WTC11 (cell line): ENCODE measurements at regions of chr1 and their contacts with region 1.

Region 1: DNA sequence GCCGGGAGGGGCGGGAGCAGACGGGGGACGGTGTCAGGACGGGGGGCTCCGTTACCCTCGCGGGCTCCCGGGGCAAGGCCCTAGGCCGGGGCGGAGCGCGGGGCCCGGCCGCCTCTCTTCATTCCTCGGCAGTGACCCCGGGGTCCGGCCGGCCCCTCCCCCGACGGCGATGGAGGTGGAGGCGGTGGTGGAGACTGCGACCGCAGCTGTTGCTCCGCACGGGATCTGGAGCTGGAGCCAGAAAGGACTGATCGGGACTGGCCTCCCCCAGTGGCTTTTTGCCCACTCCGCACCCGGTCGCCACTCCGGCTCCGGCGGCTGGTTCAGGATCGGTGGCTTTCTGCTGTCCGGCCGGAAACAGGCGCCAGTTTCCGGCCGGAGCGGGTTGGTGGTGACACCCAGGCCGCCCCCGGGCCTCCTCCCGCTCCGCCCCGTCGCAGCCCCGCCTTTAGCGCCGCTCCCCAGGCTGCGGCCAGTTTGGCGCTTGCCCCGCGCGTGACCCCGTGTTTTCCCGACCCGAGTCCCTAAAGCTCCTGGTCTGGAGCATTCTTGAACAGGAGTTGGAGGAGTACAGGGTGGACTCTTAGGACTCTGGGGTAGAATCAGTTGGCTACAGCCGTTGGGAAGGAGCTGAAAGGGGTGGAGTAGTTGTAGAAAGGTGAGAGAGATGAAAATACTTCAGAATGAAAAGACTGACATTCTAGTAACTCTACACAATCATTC is at the start of gene OTUD7B:
- DNase-seq: peak; percentile 86
- ATAC-seq: peak; percentile 86
- H3K4me3 Mint-ChIP-seq: peak within 1 kb of the TSS; percentile 94
- H3K27ac Mint-ChIP-seq: peak within 1 kb of the TSS; percentile 98
- H3K4me1 Mint-ChIP-seq: peaks cover 22% of the 10 kb centered on the region
- H3K27me3 Mint-ChIP-seq: no peaks in the 10 kb centered on the region
- CTCF ChIP-seq: no peak
- total RNA-seq, gene OTUD7B: 19.4 to 21.0 TPM (median 19.5 TPM) in 3 replicates

Region 2: DNA sequence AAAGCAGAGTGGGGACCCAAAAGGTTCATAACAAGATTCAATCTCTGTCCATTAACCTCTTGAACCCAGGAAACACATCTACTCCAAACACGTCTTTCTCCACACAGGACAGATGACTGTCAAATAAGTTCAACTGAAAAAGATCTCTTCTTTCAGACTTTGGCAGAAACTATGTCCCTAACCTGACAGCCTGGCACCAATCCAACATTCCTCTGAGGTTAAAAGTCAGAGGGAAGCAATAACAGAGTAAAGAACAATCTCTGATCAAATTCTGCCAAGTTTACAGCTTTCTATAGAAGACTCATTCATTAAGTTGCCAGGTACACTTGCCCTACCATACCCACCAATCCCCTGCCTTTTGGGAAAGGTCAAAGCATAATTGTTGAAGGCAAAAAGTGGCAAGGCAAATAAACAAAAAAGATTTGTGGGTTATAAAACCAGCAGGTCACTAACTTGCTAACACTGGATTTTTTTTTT is 32.0 kb before region 1 on chr1:
- CTCF ChIA-PET with region 1: no interaction called
- POLR2A ChIA-PET with region 1: no interaction called
- DNase-seq: no peak
- ATAC-seq: no peak
- H3K4me3 Mint-ChIP-seq: no peak overlapping the region
- H3K27ac Mint-ChIP-seq: peak overlapping the region; percentile 68; the same call in 1 of the 2 replicates
- H3K4me1 Mint-ChIP-seq: no peaks in the 10 kb centered on the region; the same call in 1 of the 2 replicates
- H3K27me3 Mint-ChIP-seq: no peaks in the 10 kb centered on the region
- CTCF ChIP-seq: no peak

Region 3: GRCh38 chr1:149995951-149996350 is 14.6 kb before region 1 on chr1:
- CTCF ChIA-PET with region 1: no interaction called
- POLR2A ChIA-PET with region 1: interaction called, 19 read pairs
- DNase-seq: no peak
- ATAC-seq: peak; percentile 55; the same call in 1 of the 2 replicates
- H3K4me3 Mint-ChIP-seq: peak overlapping the region; percentile 11; the same call in 1 of the 2 replicates
- H3K27ac Mint-ChIP-seq: peak overlapping the region; percentile 96
- H3K4me1 Mint-ChIP-seq: peaks cover 22% of the 10 kb centered on the region
- H3K27me3 Mint-ChIP-seq: no peaks in the 10 kb centered on the region
- CTCF ChIP-seq: no peak

Region 4: GRCh38 chr1:150028322-150028721 is 17.8 kb after region 1 on chr1:
- CTCF ChIA-PET with region 1: no interaction called
- POLR2A ChIA-PET with region 1: no interaction called
- DNase-seq: no peak
- ATAC-seq: no peak
- H3K4me3 Mint-ChIP-seq: no peak overlapping the region
- H3K27ac Mint-ChIP-seq: no peak overlapping the region
- H3K4me1 Mint-ChIP-seq: no peaks in the 10 kb centered on the region
- H3K27me3 Mint-ChIP-seq: no peaks in the 10 kb centered on the region; the same call in 1 of the 2 replicates
- CTCF ChIP-seq: no peak

Region 5: GRCh38 chr1:150067184-150068036 is 56.9 kb after region 1 on chr1 and contains the start of gene VPS45:
- CTCF ChIA-PET with region 1: no interaction called
- POLR2A ChIA-PET with region 1: interaction called, 16 read pairs
- DNase-seq: peak; percentile 90
- ATAC-seq: peak; percentile 98
- H3K4me3 Mint-ChIP-seq: peak within 1 kb of the TSS; percentile 96
- H3K27ac Mint-ChIP-seq: peak within 1 kb of the TSS; percentile 98
- H3K4me1 Mint-ChIP-seq: peaks cover 20% of the 10 kb centered on the region
- H3K27me3 Mint-ChIP-seq: no peaks in the 10 kb centered on the region
- CTCF ChIP-seq: no peak
- total RNA-seq, gene VPS45: 26.1 to 28.2 TPM (median 27.3 TPM) in 3 replicates

Region 6: GRCh38 chr1:150168960-150169601 is 158.5 kb after region 1 on chr1:
- CTCF ChIA-PET with region 1: no interaction called
- POLR2A ChIA-PET with region 1: no interaction called
- DNase-seq: peak; percentile 83
- ATAC-seq: peak; percentile 76
- H3K4me3 Mint-ChIP-seq: no peak overlapping the region
- H3K27ac Mint-ChIP-seq: no peak overlapping the region
- H3K4me1 Mint-ChIP-seq: peaks cover 7% of the 10 kb centered on the region
- H3K27me3 Mint-ChIP-seq: no peaks in the 10 kb centered on the region
- CTCF ChIP-seq: peak; percentile 64